ENCODE measurements at regions of chrX and their contacts with region 1.

Region 1: GRCh38 chrX:83966347-83966746 is 105.4 kb downstream of the CYLC1 start:
- DNase-seq: no peak
- ATAC-seq: no peak
- H3K4me3 ChIP-seq: no peak overlapping the region
- H3K27ac ChIP-seq: no peak overlapping the region
- H3K4me1 ChIP-seq: no peaks in the 10 kb centered on the region
- H3K27me3 ChIP-seq: no peaks in the 10 kb centered on the region
- CTCF ChIP-seq: no peak

Region 2: DNA sequence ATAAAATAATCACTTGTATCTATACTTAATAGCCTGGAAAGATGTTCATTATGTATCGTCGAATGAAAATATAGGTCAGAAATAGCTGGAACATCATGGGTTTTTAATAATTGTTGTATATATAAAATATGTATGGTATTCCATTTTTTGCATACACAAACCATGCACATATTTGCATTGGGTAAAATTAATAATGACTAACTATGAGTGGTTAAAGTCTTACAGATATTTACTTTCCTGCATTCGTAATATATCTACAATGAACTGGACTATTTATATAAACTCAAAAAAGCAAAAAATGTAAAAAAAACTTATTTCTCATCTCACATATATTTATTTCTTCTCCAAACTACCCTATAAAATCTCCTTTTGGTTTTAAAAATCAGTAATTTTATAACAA is 59.4 kb before region 1 on chrX:
- intact Hi-C with region 1: loop called in 1 of 10 experiments (anchors 10 kb)
- DNase-seq: no peak
- ATAC-seq: no peak
- H3K4me3 ChIP-seq: no peak overlapping the region
- H3K27ac ChIP-seq: no peak overlapping the region
- H3K4me1 ChIP-seq: no peaks in the 10 kb centered on the region
- H3K27me3 ChIP-seq: no peaks in the 10 kb centered on the region
- CTCF ChIP-seq: no peak

Measured in heart right ventricle (tissue), 16 donors.